ENCODE measurements at regions of chr3 and their contacts with region 1.

Region 1: DNA sequence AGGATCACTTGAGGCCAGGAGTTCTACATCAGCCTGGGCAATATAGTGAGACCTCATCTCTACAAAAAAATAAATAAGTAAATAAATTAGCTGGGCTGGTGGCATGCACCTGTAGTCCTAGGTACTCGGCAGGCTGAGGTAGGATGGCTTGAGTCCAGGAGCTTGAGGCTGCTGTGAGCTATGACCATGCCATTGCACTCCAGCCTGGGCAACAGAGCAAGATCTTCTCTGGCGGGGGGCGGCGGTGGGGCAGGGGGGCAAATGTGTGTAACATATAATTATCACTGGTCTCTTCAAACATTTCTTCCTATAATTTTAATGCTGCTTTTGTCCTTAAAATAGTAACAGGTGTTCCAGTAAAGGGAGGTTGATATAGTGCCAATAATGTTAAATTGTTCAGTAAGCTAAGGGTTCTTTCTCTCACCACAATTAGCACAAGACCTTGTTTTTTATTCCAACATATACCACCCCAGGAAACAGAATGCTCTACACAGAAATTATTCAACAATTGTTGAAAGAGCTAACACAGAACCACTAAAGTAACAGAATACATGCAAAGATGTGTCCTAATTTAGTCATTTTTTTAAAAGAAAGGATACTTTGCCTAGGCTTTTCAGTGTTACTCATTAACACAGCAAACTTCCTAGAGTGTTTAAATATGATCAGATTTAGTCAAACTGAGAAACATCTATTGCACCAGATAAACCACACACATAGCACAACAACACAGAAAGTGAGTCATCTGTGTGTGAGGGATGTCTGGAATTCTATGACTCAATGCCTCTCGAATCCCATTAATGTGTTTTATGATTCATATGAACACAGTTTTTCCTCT is 29.1 kb downstream of the ANKRD28 start:
- DNase-seq: peak; percentile 97
- ATAC-seq: peak; percentile 75
- H3K4me3 ChIP-seq: no peak overlapping the region
- H3K27ac ChIP-seq: peak overlapping the region; percentile 99
- H3K4me1 ChIP-seq: peaks cover 8% of the 10 kb centered on the region
- H3K27me3 ChIP-seq: no peaks in the 10 kb centered on the region
- CTCF ChIP-seq: no peak
- POLR2A ChIP-seq: no peak
- RAD21 ChIP-seq: no peak

Region 2: GRCh38 chr3:14253022-14253706 is 1515.5 kb before region 1 on chr3:
- CTCF ChIA-PET with region 1: no interaction called
- POLR2A ChIA-PET with region 1: no interaction called
- dilution Hi-C with region 1: no loop called
- in situ Hi-C with region 1: no loop called
- intact Hi-C with region 1: no loop called
- DNase-seq: peak; percentile 41
- ATAC-seq: peak; percentile 48
- H3K4me3 ChIP-seq: no peak overlapping the region
- H3K27ac ChIP-seq: no peak overlapping the region
- H3K4me1 ChIP-seq: peaks cover 7% of the 10 kb centered on the region; the same call in 1 of the 2 replicates
- H3K27me3 ChIP-seq: no peaks in the 10 kb centered on the region
- CTCF ChIP-seq: no peak
- POLR2A ChIP-seq: no peak
- RAD21 ChIP-seq: no peak

Region 3: DNA sequence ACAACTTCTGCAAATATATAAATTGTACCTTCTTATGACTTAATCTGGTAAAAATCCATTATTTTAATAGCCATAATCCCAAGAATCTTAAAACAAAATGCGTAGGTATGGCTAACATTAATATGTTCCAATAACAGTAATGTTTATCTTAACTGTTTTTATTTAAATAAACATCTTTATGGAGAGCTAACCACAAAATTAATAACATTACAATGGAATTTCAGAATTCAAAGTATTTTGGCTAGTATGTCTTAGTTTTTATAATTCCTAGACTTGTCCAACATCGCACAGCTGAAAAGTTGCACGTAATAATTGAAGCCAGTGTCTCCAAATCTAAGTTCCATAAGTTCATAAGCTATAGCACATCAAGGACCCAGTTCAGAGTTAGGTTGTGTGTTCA is 18.5 kb before region 1 on chr3:
- CTCF ChIA-PET with region 1: no interaction called
- POLR2A ChIA-PET with region 1: no interaction called
- dilution Hi-C with region 1: no loop called
- in situ Hi-C with region 1: no loop called
- intact Hi-C with region 1: loop called (anchors 2 kb)
- DNase-seq: peak; percentile 66
- ATAC-seq: peak; percentile 62
- H3K4me3 ChIP-seq: no peak overlapping the region
- H3K27ac ChIP-seq: peak overlapping the region; percentile 88; the same call in 1 of the 2 replicates
- H3K4me1 ChIP-seq: peaks cover 12% of the 10 kb centered on the region
- H3K27me3 ChIP-seq: no peaks in the 10 kb centered on the region
- CTCF ChIP-seq: no peak
- POLR2A ChIP-seq: no peak
- RAD21 ChIP-seq: no peak

Region 4: DNA sequence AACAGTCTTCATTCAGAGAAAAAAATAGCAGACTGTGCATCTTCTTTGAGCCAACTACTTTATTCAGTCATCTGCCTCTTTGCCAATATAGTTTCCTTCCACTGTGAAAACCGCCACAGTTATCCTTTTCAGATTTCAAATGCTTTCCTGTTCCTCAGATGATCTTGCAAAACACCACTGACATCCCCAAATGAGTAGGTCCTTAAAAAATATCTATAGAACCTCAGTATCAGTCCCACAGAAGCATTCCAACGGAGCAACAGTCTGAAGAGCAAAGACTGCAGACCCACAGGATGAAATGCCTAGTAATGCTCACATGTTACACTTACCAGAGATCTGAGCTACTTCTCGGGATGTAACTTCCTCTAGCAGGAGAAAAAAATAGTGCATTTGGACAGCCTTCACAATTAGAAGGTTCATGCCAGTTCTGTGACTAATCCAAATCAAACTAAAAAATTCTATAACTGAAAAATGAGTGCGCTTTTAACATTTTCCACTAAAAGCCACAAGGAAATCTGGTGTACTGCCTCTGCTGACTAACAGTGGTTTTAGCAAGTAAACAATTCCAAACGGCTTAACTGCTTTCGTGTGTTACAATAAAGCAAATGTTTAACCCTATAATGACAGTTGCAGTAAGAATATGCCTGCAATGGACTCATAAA is 29.1 kb after region 1 on chr3 and contains the start of gene ANKRD28:
- CTCF ChIA-PET with region 1: interaction called, 5 read pairs
- POLR2A ChIA-PET with region 1: no interaction called
- dilution Hi-C with region 1: no loop called
- in situ Hi-C with region 1: no loop called
- intact Hi-C with region 1: loop called (anchors 2 kb)
- DNase-seq: peak; percentile 98
- ATAC-seq: peak; percentile 78
- H3K4me3 ChIP-seq: peak within 1 kb of the TSS; percentile 80
- H3K27ac ChIP-seq: peak within 1 kb of the TSS; percentile 99
- H3K4me1 ChIP-seq: peaks cover 4% of the 10 kb centered on the region; the same call in 1 of the 2 replicates
- H3K27me3 ChIP-seq: no peaks in the 10 kb centered on the region
- CTCF ChIP-seq: 0 out of 2 replicates have a peak, but pooled peaks have one; percentile 19
- POLR2A ChIP-seq: peak; percentile 96
- RAD21 ChIP-seq: peak; percentile 28; the same call in 1 of the 2 replicates
- total RNA-seq, gene ANKRD28: 211 and 223 TPM in 2 replicates

Measured in IMR-90 (cell line).